Motor neuron (in vitro differentiated cells): ENCODE measurements at regions of chr11 and their contacts with region 1.

Region 1: GRCh38 chr11:75078233-75078632 is 18.4 kb downstream of the OR2AT4 start:
- ATAC-seq: no peak
- H3K4me3 ChIP-seq: no peak overlapping the region
- H3K27ac ChIP-seq: no peak overlapping the region
- H3K4me1 ChIP-seq: no peaks in the 10 kb centered on the region

Region 2: GRCh38 chr11:74627381-74627780 is 450.9 kb before region 1 on chr11:
- in situ Hi-C with region 1: no loop called
- ATAC-seq: no peak
- H3K4me3 ChIP-seq: no peak overlapping the region
- H3K27ac ChIP-seq: no peak overlapping the region
- H3K4me1 ChIP-seq: no peaks in the 10 kb centered on the region

Region 3: DNA sequence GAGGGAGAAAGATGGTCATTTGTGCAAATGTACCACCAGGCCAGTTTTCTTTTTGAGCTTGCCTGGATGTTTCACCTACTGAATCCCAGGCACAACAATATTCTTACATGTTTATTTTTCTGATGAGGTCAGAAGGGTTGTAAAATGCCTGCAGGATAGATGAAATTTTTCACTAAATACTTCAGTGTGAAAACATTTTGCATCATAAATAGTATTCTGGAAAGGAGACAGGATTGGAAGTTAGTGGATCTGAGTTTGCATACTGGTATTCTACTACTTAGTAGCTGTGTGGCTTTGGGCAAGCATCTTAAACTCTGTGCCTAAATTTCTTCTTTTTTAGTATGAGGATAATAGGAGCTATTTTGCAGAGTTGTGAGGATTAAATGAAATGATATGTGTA is 304.8 kb before region 1 on chr11:
- in situ Hi-C with region 1: no loop called
- ATAC-seq: peak in 1 of 8 experiments; percentile 19
- H3K4me3 ChIP-seq: no peak overlapping the region
- H3K27ac ChIP-seq: no peak overlapping the region
- H3K4me1 ChIP-seq: no peaks in the 10 kb centered on the region

Region 4: GRCh38 chr11:74988541-74989260 is 89.5 kb before region 1 on chr11 and contains the start of gene NEU3:
- in situ Hi-C with region 1: loop called in 1 of 9 experiments (anchors 25 kb)
- ATAC-seq: peak; percentile 87 to 95 (median 94)
- H3K4me3 ChIP-seq: peak within 1 kb of the TSS; percentile 50 to 81 (median 67)
- H3K27ac ChIP-seq: peak within 1 kb of the TSS; percentile 32 to 76
- H3K4me1 ChIP-seq: peaks cover 0 to 5% of the 10 kb centered on the region in 2 donors
- total RNA-seq, gene NEU3: 8.5 to 15.9 (median 10.7) TPM

Region 5: DNA sequence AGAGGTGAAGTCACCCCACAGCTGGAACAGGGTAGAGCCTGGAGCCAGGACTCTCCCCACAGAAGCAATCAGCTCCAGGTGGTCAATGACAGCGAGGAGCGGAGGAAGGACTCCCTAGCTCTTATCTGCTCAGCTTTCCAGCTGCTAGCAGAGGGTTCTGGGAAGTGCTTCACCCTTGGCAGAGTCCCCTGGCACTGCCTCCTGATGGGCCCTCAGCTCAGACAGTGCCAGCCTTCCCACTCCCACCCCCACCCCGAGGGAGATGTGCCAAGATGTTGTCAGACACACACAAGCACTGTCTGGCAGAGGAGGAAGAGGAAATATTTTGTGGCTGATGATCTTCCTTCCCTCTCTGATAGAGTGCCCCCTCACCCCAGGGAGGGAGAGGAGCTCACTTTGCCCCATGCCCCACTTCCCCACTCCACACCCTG is 116.9 kb after region 1 on chr11:
- in situ Hi-C with region 1: no loop called
- ATAC-seq: no peak
- H3K4me3 ChIP-seq: no peak overlapping the region
- H3K27ac ChIP-seq: no peak overlapping the region
- H3K4me1 ChIP-seq: peaks cover 0 to 5% of the 10 kb centered on the region in 2 donors